ENCODE measurements at regions of chr6 and their contacts with region 1.

Region 1: GRCh38 chr6:149895833-149896271 is 2.1 kb downstream of the RAET1E start:
- DNase-seq: peak; percentile 84
- ATAC-seq: peak; percentile 76
- H3K4me3 ChIP-seq: peak overlapping the region; percentile 30 to 51
- H3K27ac ChIP-seq: peak overlapping the region; percentile 66
- H3K4me1 ChIP-seq: peaks cover 42 to 48% of the 10 kb centered on the region in 2 experiments
- H3K27me3 ChIP-seq: no peaks in the 10 kb centered on the region
- CTCF ChIP-seq: no peak
- POLR2A ChIP-seq: no peak
- RAD21 ChIP-seq: no peak

Region 2: DNA sequence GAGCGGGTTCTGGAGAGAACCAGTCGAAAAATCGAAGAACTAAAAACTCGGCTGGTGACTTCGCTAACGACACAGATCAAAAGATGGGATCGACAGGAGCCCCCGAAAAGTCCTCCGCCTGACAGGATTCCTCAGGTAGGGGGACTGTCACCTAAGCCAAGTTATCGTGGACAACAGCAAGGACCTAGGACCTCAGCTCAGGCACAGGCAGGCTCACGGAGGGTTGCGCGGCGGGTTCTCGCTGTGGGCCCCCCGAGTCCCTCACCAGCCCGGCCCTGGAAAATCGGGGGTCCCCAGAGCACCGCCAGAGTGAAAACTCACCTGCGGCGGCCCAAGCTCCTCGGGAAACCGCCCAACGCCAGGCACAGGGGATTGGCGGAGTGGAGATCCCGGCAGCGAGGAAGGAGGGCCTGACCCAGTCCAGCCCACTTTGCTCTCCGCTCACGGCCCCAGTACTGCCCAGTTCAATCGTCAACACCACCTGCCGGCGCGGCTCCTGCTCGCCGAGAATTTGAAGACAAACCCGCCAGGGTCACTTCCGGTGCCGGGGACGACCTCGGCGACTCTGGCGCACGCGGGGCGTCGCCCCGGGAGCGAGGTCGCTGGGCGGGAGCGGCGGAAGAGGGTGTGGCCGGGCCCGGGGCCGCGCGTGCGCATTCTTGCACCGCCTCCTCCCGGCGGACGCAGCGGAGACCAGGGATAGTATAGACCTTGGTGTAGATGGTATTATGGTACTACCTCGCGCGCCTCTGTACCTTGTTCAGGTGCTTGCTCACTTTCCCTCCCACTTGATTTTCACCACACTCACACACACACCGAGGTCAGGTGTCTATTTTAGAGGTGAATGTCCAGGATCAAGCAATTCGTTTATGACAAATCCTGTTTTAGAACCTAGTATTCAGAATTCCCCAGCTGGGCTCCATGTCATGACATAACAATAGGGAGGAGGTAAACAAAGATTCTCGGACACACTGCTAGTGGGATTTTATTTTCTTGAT is 247.4 kb before region 1 on chr6 and contains the start of gene KATNA1:
- CTCF ChIA-PET with region 1: no interaction called
- POLR2A ChIA-PET with region 1: no interaction called
- RAD21 ChIA-PET with region 1: no interaction called
- intact Hi-C with region 1: loop called (anchors 5 kb)
- DNase-seq: peak; percentile 83
- ATAC-seq: peak; percentile 94
- H3K4me3 ChIP-seq: peak within 1 kb of the TSS; percentile 77 to 94
- H3K27ac ChIP-seq: peak within 1 kb of the TSS; percentile 54
- H3K4me1 ChIP-seq: peaks cover 3 to 17% of the 10 kb centered on the region in 2 experiments; a peak in 3 of 4 replicates
- H3K27me3 ChIP-seq: no peaks in the 10 kb centered on the region
- CTCF ChIP-seq: no peak
- POLR2A ChIP-seq: peak; percentile 89
- RAD21 ChIP-seq: peak; percentile 31; the same call in 1 of the 2 replicates
- total RNA-seq, gene KATNA1: 20.6 TPM

Region 3: DNA sequence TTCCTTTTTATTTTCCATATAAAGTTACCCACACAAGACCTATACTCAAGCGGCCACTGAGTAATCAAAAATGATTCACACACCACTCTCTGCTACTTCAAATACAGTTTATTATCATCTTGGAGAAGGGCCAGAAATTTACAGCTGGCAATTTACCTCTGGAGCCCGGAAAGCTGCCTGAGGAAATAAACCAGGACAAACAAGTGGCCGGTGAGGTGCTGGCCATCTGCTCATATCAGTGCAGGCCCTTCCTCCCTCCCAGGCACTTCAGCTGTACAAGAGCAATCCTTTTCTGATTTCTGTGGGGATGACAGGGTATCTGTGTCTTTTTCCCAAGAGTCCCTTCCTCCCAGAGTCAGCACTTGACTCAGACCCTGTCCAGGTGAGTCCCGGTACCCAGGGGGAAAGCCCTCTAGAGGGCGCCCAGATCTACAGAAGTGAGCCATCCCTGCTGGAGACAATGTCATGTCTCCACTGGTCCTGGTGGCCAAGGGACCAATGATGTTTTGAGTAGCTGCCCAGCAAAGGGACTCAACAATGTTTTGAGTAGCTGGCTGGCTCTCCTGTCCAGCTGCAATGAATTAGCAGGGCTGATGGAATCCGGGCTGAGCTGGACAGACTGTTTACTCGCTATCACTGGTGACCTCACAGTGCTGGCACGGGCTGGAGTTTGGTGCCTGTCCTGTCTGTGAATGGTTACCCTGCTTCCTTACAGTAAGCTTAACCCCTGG is 55.3 kb before region 1 on chr6:
- CTCF ChIA-PET with region 1: interaction called, 6 read pairs
- POLR2A ChIA-PET with region 1: no interaction called
- RAD21 ChIA-PET with region 1: no interaction called
- intact Hi-C with region 1: loop called (anchors 1 kb)
- DNase-seq: peak; percentile 68
- ATAC-seq: peak; percentile 99
- H3K4me3 ChIP-seq: no peak overlapping the region
- H3K27ac ChIP-seq: no peak overlapping the region
- H3K4me1 ChIP-seq: peaks cover 19 to 36% of the 10 kb centered on the region in 2 experiments
- H3K27me3 ChIP-seq: no peaks in the 10 kb centered on the region
- CTCF ChIP-seq: peak; percentile 84 to 93 (median 92)
- POLR2A ChIP-seq: no peak
- RAD21 ChIP-seq: peak; percentile 96

Region 4: DNA sequence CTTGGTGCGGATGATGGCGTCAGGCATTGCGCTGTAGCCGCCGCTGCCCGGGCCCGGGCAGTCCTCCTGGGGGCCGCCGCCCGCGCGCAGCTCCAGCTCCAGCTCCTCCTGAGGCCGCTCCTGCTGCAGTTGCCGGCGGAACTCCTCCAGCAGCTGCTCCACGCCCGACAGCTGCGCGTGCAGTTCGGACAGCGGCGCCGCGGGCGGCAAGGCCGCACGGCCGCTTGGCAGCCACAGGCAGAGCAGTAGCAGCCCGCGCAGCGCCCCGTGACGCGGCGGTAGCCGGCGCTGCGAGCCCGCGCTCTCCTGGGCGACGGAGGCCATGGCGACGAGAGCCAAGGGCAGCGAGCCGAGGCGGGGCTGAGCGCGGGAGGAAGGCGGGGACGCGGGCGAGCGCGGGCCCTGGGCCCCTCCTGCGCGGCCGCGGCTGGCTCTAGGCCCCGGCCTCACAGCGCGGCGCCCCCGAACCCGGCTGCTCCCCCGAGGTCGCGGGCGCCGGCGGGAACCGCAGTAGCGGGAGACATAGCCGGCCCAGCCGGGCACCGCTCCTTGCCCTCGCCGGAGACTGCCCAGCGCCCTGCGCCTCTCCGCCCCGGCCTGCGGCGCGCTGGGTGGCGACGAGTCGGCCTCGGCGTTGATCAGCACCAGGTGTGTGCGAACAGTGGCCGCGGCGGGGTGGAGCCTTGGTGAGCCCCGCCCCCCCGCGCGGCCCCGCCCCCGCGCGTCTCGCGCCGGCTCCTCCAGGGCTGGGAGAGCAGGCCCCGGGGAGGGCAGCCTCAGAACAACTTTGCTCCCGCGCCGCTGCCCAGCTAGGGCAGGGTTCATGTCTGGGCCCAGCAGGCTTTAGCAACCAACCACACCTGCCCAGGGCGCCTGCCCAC is 31.9 kb before region 1 on chr6 and contains the start of gene LRP11:
- CTCF ChIA-PET with region 1: no interaction called
- POLR2A ChIA-PET with region 1: no interaction called
- RAD21 ChIA-PET with region 1: no interaction called
- intact Hi-C with region 1: loop called (anchors 2 kb)
- DNase-seq: no peak
- ATAC-seq: peak; percentile 84
- H3K4me3 ChIP-seq: peak within 1 kb of the TSS; percentile 54 to 71
- H3K27ac ChIP-seq: peak within 1 kb of the TSS; percentile 90
- H3K4me1 ChIP-seq: peaks cover 8 to 44% of the 10 kb centered on the region in 2 experiments; a peak in 3 of 4 replicates
- H3K27me3 ChIP-seq: no peaks in the 10 kb centered on the region
- CTCF ChIP-seq: no peak
- POLR2A ChIP-seq: peak; percentile 54
- RAD21 ChIP-seq: no peak
- total RNA-seq, gene LRP11: 27.8 TPM

Region 5: DNA sequence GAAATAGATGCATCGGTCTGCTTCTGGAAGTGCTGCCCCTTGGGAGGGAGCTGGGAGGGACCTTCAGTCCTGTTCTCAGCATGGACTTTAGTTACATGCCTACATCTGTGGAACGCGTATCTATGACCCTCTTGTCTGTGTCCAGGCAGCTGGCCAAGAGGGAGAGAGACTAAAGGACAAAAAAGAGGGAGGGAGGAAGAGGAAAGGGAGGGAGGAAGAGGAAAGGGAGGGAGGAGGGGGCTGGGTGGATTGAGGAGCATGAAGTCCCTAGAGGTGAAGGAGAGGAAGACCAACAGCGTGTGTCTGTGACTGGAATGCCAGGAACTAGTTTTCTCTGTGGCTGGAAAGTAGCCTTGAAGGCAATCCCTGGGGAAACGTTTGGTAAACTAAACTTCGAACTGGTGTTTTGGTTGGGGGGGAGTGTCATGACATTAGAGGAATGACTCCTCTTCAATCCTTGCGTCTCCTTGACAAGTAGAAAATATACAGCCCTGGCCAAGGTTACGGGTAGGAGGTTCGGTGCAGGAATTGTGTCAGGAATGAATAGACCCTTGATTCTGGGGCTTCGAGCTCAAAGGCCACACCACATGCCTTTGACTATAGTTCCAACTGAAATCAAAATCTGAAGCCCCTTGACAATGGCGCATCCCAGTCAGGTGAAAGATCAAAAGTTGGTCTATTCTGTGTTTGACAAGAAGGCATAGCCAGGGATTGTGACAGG is 651.8 kb after region 1 on chr6:
- CTCF ChIA-PET with region 1: no interaction called
- POLR2A ChIA-PET with region 1: no interaction called
- RAD21 ChIA-PET with region 1: no interaction called
- intact Hi-C with region 1: no loop called
- DNase-seq: no peak
- ATAC-seq: peak; percentile 50; the same call in 1 of the 2 replicates
- H3K4me3 ChIP-seq: no peak overlapping the region
- H3K27ac ChIP-seq: no peak overlapping the region
- H3K4me1 ChIP-seq: no peaks in the 10 kb centered on the region
- H3K27me3 ChIP-seq: no peaks in the 10 kb centered on the region
- CTCF ChIP-seq: no peak
- POLR2A ChIP-seq: no peak
- RAD21 ChIP-seq: no peak